H1 (cell line): ENCODE measurements at regions of chr12 and their contacts with region 1.

Region 1: DNA sequence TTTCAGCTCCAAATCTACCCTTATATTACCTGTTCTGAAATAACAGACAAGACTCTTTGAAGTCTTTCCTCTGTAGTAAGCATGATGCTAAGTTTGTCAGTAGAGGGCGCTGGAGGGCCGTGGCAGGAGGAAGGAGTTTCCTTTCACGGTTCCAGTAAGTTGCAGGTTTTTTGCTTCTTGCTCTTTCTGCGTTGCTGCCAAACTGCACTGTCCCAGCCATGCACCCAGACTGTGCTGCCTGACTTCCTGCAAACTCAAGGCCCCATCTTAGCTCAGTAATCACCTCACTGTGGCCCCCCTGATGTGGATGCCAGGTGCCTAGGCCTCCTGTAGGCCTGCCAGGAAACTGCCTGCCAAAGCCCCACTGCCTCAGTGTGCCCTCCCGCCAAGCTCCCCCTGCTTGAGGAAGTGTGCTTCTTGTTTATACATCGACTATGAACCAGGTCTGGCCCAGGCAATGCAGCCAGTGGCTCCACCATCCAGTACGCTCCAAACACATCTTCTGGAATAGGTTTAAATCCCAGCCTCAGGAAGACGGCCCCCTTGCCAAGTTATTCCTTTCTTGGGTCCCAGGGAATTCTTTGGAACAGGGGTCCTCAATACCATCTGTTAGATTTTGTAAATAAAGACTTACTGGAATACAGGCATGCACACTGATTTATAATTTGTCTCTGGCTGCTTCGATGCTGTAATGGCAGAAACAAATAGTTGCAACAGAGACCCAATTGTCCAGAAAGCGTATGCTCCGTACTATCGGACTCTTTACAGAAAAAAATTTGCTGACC is 193.7 kb upstream of the LRIG3 start:
- DNase-seq: peak; percentile 63 to 88
- H3K4me3 ChIP-seq: no peak overlapping the region
- H3K27ac ChIP-seq: no peak overlapping the region
- H3K4me1 ChIP-seq: 0 out of 7 replicates have a peak, but pooled peaks cover 0 to 3% (median 0%) of the 10 kb centered on the region in 4 experiments
- H3K27me3 ChIP-seq: no peaks in the 10 kb centered on the region
- CTCF ChIP-seq: peak; percentile 53 to 90 (median 88)
- EP300 ChIP-seq: no peak
- POLR2A ChIP-seq: no peak
- RAD21 ChIP-seq: peak; percentile 94

Region 2: GRCh38 chr12:59067083-59067482 is 46.9 kb before region 1 on chr12:
- CTCF ChIA-PET with region 1: no interaction called
- POLR2A ChIA-PET with region 1: no interaction called
- DNase-seq: no peak
- H3K4me3 ChIP-seq: no peak overlapping the region
- H3K27ac ChIP-seq: no peak overlapping the region
- H3K4me1 ChIP-seq: no peaks in the 10 kb centered on the region
- H3K27me3 ChIP-seq: no peaks in the 10 kb centered on the region
- CTCF ChIP-seq: no peak
- EP300 ChIP-seq: no peak
- POLR2A ChIP-seq: no peak
- RAD21 ChIP-seq: no peak

Region 3: DNA sequence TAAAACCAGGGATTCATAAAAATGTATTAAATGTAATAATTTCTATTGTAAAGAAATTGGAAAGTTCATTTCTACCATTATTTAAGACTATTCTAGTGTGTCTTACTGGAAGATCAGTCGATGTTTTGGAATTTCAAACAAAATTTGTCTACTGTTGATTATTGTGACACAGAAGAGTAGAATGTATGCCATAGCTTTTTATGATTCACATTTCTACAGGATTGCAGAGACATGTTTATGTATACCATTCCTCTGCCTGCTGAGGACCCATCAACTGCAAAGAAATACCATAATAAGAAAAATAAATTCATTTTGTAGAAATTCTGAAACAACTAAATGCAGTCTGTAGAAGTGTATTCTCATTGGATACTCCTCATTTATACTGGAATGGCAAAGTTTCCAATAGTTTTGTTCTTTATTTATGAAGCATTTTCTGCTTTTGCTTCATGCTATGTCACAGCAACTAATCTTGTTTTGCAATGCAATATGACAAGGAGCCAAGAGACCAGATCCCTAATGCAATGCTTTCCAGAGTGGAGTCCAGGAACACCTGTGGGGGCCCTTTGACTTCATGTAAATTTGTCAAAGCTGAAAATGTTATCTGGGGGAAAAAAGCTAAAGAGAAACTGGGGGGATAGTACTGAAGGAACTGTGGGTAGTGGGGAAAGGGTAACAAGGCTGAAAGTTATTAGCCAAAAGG is 20.8 kb before region 1 on chr12:
- CTCF ChIA-PET with region 1: interaction called, 14 read pairs
- POLR2A ChIA-PET with region 1: no interaction called
- DNase-seq: no peak
- H3K4me3 ChIP-seq: no peak overlapping the region
- H3K27ac ChIP-seq: no peak overlapping the region
- H3K4me1 ChIP-seq: no peaks in the 10 kb centered on the region
- H3K27me3 ChIP-seq: peaks cover 0 to 1% (median 0%) of the 10 kb centered on the region in 4 experiments; a peak in 1 of 7 replicates
- CTCF ChIP-seq: no peak
- EP300 ChIP-seq: no peak
- POLR2A ChIP-seq: no peak
- RAD21 ChIP-seq: no peak

Region 4: DNA sequence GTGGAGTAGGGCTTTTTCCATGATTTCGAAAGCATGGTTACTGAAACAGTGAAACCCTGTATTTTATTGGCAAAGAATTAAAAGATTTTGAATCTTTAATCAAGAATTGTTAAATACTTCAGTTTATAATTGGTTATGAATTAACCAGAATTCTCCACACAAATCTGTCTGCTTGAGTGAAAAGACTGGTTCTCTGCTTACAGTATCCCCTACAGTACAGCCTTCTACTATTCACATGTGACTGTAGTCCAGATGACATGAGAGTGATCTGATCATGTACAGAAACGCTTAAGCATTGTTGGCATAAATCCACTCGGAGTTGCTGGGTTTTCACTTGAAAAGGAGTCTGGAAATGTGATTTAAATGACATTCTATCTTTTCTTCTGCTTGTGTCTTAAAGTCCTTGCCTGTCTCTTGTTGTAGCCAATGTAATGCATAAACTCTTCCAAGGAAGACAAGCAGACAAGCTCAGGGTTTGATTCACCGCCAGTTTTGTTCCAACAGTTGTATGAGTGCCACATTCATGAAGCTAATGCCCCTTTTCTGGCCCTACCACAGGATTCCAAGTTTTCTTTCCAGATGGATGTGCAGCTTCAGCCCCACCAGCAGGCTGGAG is 28.3 kb after region 1 on chr12:
- CTCF ChIA-PET with region 1: interaction called, 30 read pairs
- POLR2A ChIA-PET with region 1: no interaction called
- DNase-seq: no peak
- H3K4me3 ChIP-seq: no peak overlapping the region
- H3K27ac ChIP-seq: no peak overlapping the region
- H3K4me1 ChIP-seq: no peaks in the 10 kb centered on the region
- H3K27me3 ChIP-seq: no peaks in the 10 kb centered on the region
- CTCF ChIP-seq: no peak
- EP300 ChIP-seq: no peak
- POLR2A ChIP-seq: no peak
- RAD21 ChIP-seq: no peak

Region 5: DNA sequence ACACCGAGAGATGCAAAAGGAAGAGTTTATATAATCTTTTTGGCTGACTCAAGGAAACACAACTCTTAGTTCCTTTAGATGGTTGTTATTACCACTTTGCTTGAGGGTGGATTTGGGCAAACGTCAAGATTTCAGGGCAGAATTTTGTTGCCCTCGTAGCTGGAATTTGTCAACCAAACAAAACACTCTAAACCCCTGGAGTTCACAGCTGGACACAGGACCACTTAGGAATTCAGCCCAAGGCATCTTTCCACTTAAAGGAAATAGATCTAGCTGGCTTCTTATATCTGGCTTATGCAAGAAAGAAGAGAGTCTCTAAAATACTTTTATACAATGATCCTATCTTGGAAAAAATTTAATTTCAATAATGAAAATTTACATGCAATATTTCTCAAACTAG is 44.0 kb after region 1 on chr12:
- CTCF ChIA-PET with region 1: interaction called, 103 read pairs
- POLR2A ChIA-PET with region 1: interaction called, 3 read pairs
- DNase-seq: no peak
- H3K4me3 ChIP-seq: no peak overlapping the region
- H3K27ac ChIP-seq: no peak overlapping the region
- H3K4me1 ChIP-seq: no peaks in the 10 kb centered on the region
- H3K27me3 ChIP-seq: no peaks in the 10 kb centered on the region
- CTCF ChIP-seq: no peak
- EP300 ChIP-seq: no peak
- POLR2A ChIP-seq: no peak
- RAD21 ChIP-seq: no peak

Region 6: GRCh38 chr12:59372956-59373355 is 258.9 kb after region 1 on chr12:
- CTCF ChIA-PET with region 1: interaction called, 13 read pairs
- POLR2A ChIA-PET with region 1: no interaction called
- DNase-seq: no peak
- H3K4me3 ChIP-seq: no peak overlapping the region
- H3K27ac ChIP-seq: no peak overlapping the region
- H3K4me1 ChIP-seq: peaks cover 0 to 3% (median 0%) of the 10 kb centered on the region in 4 experiments; a peak in 1 of 7 replicates
- H3K27me3 ChIP-seq: no peaks in the 10 kb centered on the region
- CTCF ChIP-seq: peak; percentile 31 to 58 (median 46)
- EP300 ChIP-seq: no peak
- POLR2A ChIP-seq: no peak
- RAD21 ChIP-seq: peak; percentile 76